Left ventricle myocardium superior (tissue), 1 donor: ENCODE measurements at regions of chr2 and their contacts with region 1.

Region 1: DNA sequence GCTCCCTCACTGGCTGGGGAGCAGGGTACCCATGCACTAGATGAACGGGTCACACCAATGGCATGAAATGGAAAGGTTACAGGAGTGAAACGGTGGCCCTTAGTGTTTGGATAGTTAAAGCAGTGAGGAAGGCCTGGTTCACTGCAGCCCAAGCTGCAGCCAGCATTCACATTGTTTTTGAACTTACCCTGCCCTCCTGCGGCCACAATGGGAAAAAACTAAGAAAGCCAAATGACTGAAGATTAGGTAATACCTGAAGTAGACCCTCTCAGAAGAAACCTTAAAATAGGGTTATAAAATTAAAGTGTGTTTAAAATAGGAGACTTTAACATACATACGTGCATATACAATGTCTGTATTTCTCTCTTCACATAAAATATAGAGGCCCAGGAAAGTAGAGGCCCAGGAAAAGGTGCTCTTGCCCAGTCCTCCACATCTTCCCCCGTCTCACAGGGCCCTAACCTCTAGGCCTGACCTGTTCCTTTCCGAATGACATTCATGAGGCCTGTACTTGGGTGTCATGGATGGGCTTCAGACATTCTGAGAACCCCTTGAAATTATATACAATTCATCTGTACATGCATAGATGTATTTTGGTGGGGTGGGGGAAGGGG is 33.3 kb downstream of the DOK1 start:
- DNase-seq: peak; percentile 60
- ATAC-seq: peak; percentile 91

Region 2: DNA sequence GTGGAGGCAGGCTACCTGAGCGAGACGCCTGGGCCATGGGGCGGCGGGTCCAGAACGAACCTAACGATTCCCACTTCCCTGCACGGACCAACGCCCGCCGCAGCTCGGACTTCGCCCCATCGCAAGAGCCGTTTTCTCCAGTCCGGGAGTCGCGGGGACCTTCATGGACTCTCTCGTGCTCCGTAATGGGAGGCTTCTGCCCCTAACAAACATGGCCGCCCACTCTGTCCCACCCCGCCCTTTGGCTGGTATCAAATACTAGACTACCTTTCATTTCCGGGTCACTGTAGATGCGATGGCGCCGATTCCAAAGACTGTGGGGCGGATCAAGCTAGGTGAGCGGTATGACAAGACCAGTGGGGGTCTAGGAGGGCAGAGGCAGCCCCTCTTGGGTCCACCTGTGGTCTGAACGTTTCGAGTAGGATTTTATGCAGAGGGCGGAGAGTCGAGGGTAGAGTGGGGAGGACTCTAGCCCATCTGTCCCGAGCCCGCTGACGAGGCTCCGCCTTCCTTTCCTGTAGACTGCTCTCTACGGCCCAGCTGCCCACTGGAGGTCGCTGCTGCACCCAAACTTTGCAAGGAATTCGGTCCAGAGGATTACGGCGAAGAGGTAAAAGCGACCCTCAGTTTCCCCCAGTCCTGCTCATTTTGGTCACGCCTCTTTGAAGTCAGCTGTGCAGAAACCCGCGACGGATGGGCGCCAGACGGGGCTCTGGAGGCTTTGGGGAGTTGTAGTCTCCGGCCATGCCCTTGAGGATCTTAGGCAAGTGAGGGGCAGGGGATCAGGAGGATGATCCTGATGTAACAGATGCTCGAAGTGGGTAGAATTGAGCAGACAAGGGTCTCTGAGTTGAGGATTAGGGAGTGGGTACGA is 104.7 kb before region 1 on chr2 and contains the starts of genes CCDC142 and TTC31:
- intact Hi-C with region 1: loop called (anchors 5 kb)
- DNase-seq: peak; percentile 97
- ATAC-seq: peak; percentile 98
- total RNA-seq, gene CCDC142: 6.6 TPM
- total RNA-seq, gene TTC31: 9.4 TPM

Region 3: GRCh38 chr2:74502720-74503505 is 84.9 kb before region 1 on chr2:
- intact Hi-C with region 1: loop called (anchors 5 kb)
- DNase-seq: peak; percentile 90
- ATAC-seq: peak; percentile 73

Region 4: DNA sequence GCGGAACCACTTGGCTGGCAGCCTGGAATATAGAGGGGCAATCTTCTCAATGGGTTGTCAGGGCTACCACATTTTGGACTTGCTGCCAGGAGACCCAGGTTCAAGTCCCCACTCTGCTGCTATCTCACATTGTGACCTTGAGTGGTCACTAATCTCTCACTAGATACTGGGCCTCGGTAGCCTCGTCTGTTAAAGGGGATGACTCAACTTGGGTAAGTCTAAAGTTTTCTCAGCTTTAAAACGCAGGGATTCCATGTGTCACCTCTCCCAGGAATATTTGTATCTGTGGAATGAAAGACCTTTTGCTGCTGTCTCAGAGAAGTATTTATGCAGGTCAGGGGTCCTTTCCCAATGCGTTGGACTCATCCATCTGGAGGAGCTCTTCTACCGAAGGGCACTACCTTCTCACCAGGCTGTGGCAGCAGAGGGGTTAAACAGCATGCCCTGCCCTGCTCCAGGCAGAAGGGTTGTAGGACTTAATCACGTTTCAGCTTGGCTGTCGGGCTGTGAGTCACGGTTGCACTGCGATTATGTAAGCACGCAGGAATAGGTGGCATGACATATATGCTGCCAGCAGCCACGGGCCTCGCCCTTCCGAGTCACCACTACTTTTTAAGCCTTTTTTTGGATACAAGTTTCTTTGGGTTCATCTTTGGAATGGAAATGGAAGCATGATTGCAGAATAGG is 152.8 kb after region 1 on chr2:
- intact Hi-C with region 1: no loop called
- DNase-seq: peak; percentile 45
- ATAC-seq: peak; percentile 93